AG04450 (cell line): ENCODE measurements at regions of chr7 and their contacts with region 1.

Region 1: DNA sequence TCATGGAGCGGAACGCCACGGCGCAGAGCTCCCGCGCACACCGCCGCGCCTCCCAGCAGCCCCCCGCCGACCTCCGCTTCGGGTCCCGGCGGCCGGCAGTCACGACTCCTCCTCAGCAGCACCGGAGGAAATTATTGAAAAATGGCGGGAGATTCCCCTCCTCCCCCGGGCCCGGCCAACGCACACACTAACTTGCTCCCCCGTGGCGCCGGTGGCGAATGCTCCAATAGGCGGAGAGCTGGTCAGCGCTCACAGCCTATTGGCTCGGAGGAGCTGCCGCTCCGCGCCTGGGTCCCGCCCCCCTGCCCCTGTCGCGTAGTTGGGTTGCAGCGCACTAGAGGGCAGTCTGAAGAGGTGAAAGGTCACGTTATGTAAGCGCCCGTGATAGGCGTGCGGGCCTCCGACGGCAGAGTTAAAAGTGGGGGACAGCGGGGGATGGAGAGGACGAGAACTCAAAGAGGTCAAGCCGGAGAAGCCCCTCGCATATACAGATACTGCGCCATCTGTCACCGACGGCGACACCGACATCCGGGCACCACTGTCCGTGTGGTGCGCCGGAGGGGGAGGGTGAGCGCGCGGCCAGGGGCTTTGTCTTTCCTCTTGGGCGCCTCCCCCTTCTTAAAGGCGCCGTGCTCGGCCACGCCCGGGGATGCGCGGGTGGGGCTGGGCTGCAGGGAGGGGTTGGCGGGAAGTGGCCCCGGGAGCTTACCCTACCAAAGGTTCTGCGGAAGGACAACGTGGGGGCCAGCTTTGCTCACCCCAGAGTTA is at the start of gene BAZ1B:
- DNase-seq: peak; percentile 95
- H3K4me3 ChIP-seq: peak within 1 kb of the TSS; percentile 80
- H3K27ac ChIP-seq: peak within 1 kb of the TSS; percentile 59
- H3K27me3 ChIP-seq: no peaks in the 10 kb centered on the region
- CTCF ChIP-seq: peak; percentile 15; the same call in 1 of the 2 replicates
- polyA plus RNA-seq, gene BAZ1B: 29.0 and 29.7 TPM in 2 replicates

Region 2: DNA sequence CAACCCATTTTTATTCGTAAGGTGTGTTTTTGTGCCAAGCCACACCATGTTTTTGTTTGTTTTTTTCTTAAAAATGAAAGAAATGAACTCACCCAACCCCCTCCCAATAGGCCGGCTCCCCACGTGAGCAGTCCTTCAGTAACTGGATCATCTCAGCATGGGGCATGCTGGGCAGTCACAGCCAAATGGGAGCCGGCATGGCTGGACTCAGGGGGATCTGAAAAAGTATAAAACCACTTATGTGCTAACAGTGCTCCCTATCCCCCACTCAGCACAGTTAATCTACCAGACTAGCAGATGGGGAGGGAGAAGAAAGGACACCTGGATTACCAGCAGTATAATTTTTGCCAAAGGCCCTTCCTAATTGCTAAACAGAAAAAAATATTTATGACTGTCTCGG is 39.5 kb before region 1 on chr7:
- CTCF ChIA-PET with region 1: no interaction called
- POLR2A ChIA-PET with region 1: no interaction called
- DNase-seq: no peak
- H3K4me3 ChIP-seq: no peak overlapping the region
- H3K27ac ChIP-seq: no peak overlapping the region
- H3K27me3 ChIP-seq: no peaks in the 10 kb centered on the region
- CTCF ChIP-seq: no peak

Region 3: DNA sequence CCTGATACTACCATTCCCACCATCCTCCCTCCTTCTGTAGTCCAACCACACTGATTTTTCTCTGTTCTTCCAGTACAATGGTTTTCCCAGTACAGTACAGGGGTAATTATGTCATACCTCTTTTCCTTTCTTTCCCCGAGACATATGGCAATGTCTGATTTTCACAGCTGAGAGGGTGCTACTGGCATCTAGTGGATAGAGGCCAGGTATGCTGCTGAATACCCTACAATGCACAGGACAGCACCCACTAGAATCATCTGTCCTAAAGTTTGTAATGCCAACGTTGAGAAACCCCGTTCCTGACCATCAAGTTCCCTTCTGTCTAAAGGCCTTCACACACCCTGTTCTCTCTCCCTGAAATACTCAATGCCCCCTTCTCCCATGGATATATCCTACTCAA is 20.9 kb before region 1 on chr7:
- CTCF ChIA-PET with region 1: no interaction called
- POLR2A ChIA-PET with region 1: no interaction called
- DNase-seq: no peak
- H3K4me3 ChIP-seq: no peak overlapping the region
- H3K27ac ChIP-seq: no peak overlapping the region
- H3K27me3 ChIP-seq: no peaks in the 10 kb centered on the region
- CTCF ChIP-seq: no peak

Region 4: GRCh38 chr7:73536479-73536878 is 14.2 kb after region 1 on chr7:
- CTCF ChIA-PET with region 1: no interaction called
- POLR2A ChIA-PET with region 1: interaction called, 12 read pairs
- DNase-seq: no peak
- H3K4me3 ChIP-seq: no peak overlapping the region
- H3K27ac ChIP-seq: no peak overlapping the region
- H3K27me3 ChIP-seq: no peaks in the 10 kb centered on the region
- CTCF ChIP-seq: no peak

Region 5: GRCh38 chr7:73647725-73648592 is 125.7 kb after region 1 on chr7:
- CTCF ChIA-PET with region 1: no interaction called
- POLR2A ChIA-PET with region 1: no interaction called
- DNase-seq: no peak
- H3K4me3 ChIP-seq: peak overlapping the region; percentile 29; the same call in 1 of the 2 replicates
- H3K27ac ChIP-seq: no peak overlapping the region
- H3K27me3 ChIP-seq: peaks cover 58% of the 10 kb centered on the region
- CTCF ChIP-seq: no peak

Region 6: GRCh38 chr7:74554178-74554577 is 1031.9 kb after region 1 on chr7:
- CTCF ChIA-PET with region 1: no interaction called
- POLR2A ChIA-PET with region 1: no interaction called
- DNase-seq: no peak
- H3K4me3 ChIP-seq: no peak overlapping the region
- H3K27ac ChIP-seq: no peak overlapping the region
- H3K27me3 ChIP-seq: no peaks in the 10 kb centered on the region
- CTCF ChIP-seq: no peak